HEK293 (cell line): ENCODE measurements at regions of chr19 and their contacts with region 1.

Region 1: GRCh38 chr19:7652061-7652641 is 15.2 kb downstream of the STXBP2 start:
- H3K4me3 ChIP-seq: peak overlapping the region; percentile 16; the same call in 1 of the 2 replicates
- H3K27ac ChIP-seq: no peak overlapping the region; the same call in 1 of the 2 replicates
- H3K4me1 ChIP-seq: no peaks in the 10 kb centered on the region
- CTCF ChIP-seq: peak; percentile 83

Region 2: DNA sequence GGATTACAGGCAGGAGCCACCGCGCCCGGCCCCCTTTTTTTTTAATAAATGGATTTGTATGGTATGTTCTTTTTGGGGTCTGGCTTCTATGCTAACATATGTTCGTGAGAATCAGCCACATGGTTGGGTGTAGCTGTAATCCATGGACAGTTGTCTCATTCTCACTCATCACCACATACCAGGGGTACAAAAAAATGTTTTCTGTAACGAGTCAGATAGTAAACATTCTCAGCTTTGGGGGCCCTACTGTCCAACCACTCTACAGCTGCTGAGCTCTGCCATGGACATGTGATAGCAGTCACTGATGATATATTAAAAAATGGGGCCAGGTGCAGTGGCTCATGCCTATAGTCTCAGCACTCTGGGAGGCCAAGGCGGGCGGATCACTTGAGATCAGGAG is 11.6 kb after region 1 on chr19:
- CTCF ChIA-PET with region 1: interaction called, 14 read pairs
- POLR2A ChIA-PET with region 1: no interaction called
- H3K4me3 ChIP-seq: no peak overlapping the region
- H3K27ac ChIP-seq: no peak overlapping the region
- H3K4me1 ChIP-seq: no peaks in the 10 kb centered on the region
- CTCF ChIP-seq: no peak